MCF 10A (cell line): ENCODE measurements at regions of chr20 and their contacts with region 1.

Region 1: DNA sequence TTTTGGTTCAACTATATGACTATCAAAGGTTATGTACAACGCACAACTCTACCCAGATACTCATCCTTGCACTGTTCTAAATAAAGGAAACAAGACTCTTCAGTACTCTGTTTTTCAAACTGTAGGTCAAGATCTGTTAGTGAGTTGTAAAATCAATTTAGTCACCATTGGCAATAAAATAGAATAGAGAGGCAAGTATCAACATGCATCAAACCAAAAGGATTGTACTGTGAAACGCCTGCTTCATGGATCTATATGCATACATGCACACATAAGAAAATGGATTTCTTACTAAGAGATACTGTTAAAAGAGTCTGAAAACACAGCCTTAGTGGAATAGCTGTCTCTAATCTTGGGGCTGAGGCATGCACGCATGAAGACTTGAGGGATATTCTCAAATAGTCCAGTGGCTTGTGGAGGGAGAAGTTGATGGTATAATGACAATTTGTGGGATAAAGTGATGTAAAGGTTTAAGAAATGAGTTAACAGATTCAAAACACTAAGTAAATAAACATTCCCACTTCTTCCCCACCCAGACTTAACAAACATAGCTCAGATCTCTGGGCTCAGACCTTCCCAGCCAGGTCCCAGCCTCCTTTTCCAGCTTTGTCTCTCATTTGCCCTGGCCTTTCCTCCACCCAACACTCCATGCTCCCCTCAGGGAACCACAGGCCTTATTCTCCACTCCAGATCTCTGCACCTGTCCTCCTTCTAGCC is 10.7 kb upstream of the LZTS3 start:
- DNase-seq: no peak
- H3K4me3 Mint-ChIP-seq: no peak overlapping the region
- H3K27ac Mint-ChIP-seq: peak overlapping the region; percentile 14
- H3K4me1 Mint-ChIP-seq: peaks cover 10% of the 10 kb centered on the region
- H3K27me3 Mint-ChIP-seq: no peaks in the 10 kb centered on the region
- CTCF ChIP-seq: no peak

Region 2: GRCh38 chr20:3173610-3174441 is 10.2 kb before region 1 on chr20:
- CTCF ChIA-PET with region 1: interaction called, 3 read pairs
- POLR2A ChIA-PET with region 1: interaction called, 20 read pairs
- intact Hi-C with region 1: no loop called
- DNase-seq: peak; percentile 83
- H3K4me3 Mint-ChIP-seq: peak overlapping the region; percentile 93
- H3K27ac Mint-ChIP-seq: peak overlapping the region; percentile 86
- H3K4me1 Mint-ChIP-seq: peaks cover 14% of the 10 kb centered on the region
- H3K27me3 Mint-ChIP-seq: no peaks in the 10 kb centered on the region
- CTCF ChIP-seq: peak; percentile 16